ENCODE measurements at regions of chr3 and their contacts with region 1.

Region 1: GRCh38 chr3:71478568-71478967 is 105.0 kb downstream of the FOXP1 start:
- DNase-seq: peak in 9 of 10 donors; percentile 22 to 91 (median 62)
- ATAC-seq: peak; percentile 87 to 89
- H3K4me3 Mint-ChIP-seq: peak overlapping the region; percentile 9 to 85 (median 66)
- H3K27ac Mint-ChIP-seq: peak overlapping the region; percentile 89 to 98 (median 96)
- H3K4me1 Mint-ChIP-seq: peaks cover 38 to 93% (median 87%) of the 10 kb centered on the region in 4 donors
- H3K27me3 Mint-ChIP-seq: no peaks in the 10 kb centered on the region

Region 2: GRCh38 chr3:71466483-71466882 is 12.1 kb before region 1 on chr3:
- POLR2A ChIA-PET with region 1: interaction called, 11 read pairs
- DNase-seq: no peak
- ATAC-seq: no peak
- H3K4me3 Mint-ChIP-seq: peak overlapping the region in 2 of 10 donors; percentile 32 to 67
- H3K27ac Mint-ChIP-seq: peak overlapping the region; percentile 5 to 92 (median 82)
- H3K4me1 Mint-ChIP-seq: peaks cover 40 to 93% (median 82%) of the 10 kb centered on the region in 4 donors
- H3K27me3 Mint-ChIP-seq: no peaks in the 10 kb centered on the region